Ascending aorta (tissue), 2 donors: ENCODE measurements at regions of chr10 and their contacts with region 1.

Region 1: GRCh38 chr10:80205478-80206276 is at the start of gene ANXA11:
- DNase-seq: peak; percentile 58 to 92
- H3K4me3 ChIP-seq: peak within 1 kb of the TSS; percentile 73 to 88
- H3K27ac ChIP-seq: peak within 1 kb of the TSS; percentile 96 to 97
- H3K4me1 ChIP-seq: peaks cover 18 to 48% of the 10 kb centered on the region in 2 donors
- H3K27me3 ChIP-seq: no peaks in the 10 kb centered on the region
- CTCF ChIP-seq: no peak
- total RNA-seq, gene ANXA11: 237 TPM

Region 2: GRCh38 chr10:80154975-80155695 is 50.5 kb before region 1 on chr10:
- intact Hi-C with region 1: loop called (anchors 1 kb)
- DNase-seq: peak in 1 of 2 donors; percentile 89
- H3K4me3 ChIP-seq: no peak overlapping the region
- H3K27ac ChIP-seq: peak overlapping the region; percentile 92 to 94
- H3K4me1 ChIP-seq: peaks cover 36 to 56% of the 10 kb centered on the region in 2 donors
- H3K27me3 ChIP-seq: no peaks in the 10 kb centered on the region
- CTCF ChIP-seq: no peak

Region 3: DNA sequence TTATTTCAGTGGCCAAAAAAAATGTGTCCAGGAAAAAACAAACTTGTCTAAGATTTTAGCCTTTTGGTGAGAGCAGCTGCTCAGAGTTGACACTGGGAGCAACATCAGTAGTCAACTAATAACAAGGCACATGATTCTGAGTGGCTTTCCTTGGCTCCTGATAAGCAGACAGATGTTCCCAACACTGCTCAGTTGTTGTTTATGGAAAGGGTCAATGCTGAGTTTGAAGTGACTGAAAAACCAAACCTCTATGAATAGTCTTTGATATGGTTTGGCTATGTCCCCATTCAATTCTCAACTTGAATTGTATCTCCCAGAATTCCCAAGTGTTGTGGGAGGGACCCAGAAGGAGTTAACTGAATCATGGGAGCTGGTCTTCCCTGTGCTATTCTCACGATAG is 138.6 kb after region 1 on chr10:
- intact Hi-C with region 1: no loop called
- DNase-seq: no peak
- H3K4me3 ChIP-seq: no peak overlapping the region
- H3K27ac ChIP-seq: no peak overlapping the region
- H3K4me1 ChIP-seq: no peaks in the 10 kb centered on the region
- H3K27me3 ChIP-seq: no peaks in the 10 kb centered on the region
- CTCF ChIP-seq: no peak